Psoas muscle (tissue), 8 donors: ENCODE measurements at regions of chr6 and their contacts with region 1.

Region 1: GRCh38 chr6:107318100-107318736 is 141.1 kb downstream of the PDSS2 start:
- DNase-seq: peak; percentile 32 to 58
- ATAC-seq: peak; percentile 60 to 92 (median 82)
- H3K4me3 ChIP-seq: no peak overlapping the region
- H3K27ac ChIP-seq: no peak overlapping the region
- H3K4me1 ChIP-seq: no peaks in the 10 kb centered on the region
- H3K27me3 ChIP-seq: no peaks in the 10 kb centered on the region
- CTCF ChIP-seq: peak; percentile 62

Region 2: GRCh38 chr6:107264357-107264840 is 53.8 kb before region 1 on chr6:
- intact Hi-C with region 1: no loop called
- DNase-seq: no peak
- ATAC-seq: no peak
- H3K4me3 ChIP-seq: no peak overlapping the region
- H3K27ac ChIP-seq: no peak overlapping the region
- H3K4me1 ChIP-seq: no peaks in the 10 kb centered on the region
- H3K27me3 ChIP-seq: no peaks in the 10 kb centered on the region
- CTCF ChIP-seq: no peak

Region 3: DNA sequence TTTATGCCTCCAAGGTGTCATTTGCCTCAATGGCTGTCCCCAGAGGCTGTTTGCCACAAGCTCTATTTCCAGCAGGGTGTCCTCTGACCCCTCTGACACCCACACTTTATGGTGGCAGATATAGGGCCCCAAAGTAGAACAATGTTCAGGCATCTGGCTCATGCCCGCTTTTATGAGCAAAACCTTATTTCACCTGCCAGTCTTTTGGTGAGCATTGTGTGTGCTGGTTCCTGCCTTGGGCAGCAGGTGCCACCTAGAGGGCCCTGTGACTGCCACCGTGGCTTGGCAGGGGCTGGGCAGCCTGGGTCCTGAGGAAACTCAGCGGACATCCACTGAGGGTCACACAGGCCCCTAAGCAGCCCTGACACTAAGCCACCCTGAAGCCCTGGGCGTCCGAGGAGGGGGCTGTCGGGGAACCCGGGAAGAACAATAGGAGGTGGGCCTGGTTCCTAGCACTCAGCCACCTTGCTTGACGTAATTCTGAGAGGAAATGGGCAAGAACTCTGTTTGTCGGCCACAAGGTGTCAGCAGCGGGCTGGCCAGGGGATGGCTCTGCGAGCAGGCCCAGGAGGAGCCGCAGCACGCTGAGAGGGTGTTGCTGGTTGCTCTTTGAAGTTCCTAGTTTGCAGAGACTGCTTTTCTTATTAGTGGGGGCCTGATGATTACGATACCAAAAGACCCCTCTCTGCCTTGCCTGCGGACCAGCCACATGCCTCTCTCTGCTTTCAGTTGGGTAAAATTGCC is 356.9 kb after region 1 on chr6:
- intact Hi-C with region 1: loop called in 1 of 2 experiments (anchors 10 kb)
- DNase-seq: peak; percentile 81 to 94
- ATAC-seq: peak; percentile 85 to 96 (median 88)
- H3K4me3 ChIP-seq: peak overlapping the region; percentile 44
- H3K27ac ChIP-seq: peak overlapping the region; percentile 56
- H3K4me1 ChIP-seq: peaks cover 27% of the 10 kb centered on the region
- H3K27me3 ChIP-seq: no peaks in the 10 kb centered on the region
- CTCF ChIP-seq: peak; percentile 91

Region 4: DNA sequence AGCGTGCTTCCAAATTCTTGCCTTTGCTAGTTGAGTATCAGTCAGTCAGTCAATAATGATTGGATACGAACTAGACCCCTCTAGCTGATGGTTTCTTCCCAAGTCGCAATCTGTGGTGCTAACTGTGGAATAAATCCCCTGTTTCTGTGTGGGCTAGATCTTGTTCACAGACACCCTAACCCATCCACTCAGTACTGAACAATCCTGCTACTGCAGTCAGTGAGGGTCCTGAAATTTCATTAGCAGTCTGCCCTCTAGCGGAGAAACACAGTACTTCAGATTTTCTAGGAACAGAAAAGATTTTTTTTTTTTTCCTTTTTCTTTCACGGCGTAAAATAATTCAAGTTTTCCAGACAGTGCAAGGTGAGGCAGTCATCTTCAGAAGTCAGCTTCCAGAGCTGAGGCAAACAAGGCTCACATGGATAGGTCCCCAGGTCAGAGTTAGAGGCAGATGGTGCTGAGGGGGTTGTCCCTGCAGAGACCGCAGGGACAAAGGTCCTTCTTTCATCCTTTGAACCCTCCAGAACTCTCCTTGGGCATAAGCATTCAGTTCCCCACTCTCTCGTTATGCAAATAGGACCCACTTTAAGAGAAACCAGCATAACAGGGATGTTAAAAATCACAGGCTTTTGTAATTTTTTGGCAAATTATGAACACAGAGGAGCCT is 386.3 kb after region 1 on chr6:
- intact Hi-C with region 1: loop called in 1 of 2 experiments (anchors 10 kb)
- DNase-seq: no peak
- ATAC-seq: peak; percentile 47 to 74 (median 60)
- H3K4me3 ChIP-seq: no peak overlapping the region
- H3K27ac ChIP-seq: no peak overlapping the region
- H3K4me1 ChIP-seq: no peaks in the 10 kb centered on the region
- H3K27me3 ChIP-seq: no peaks in the 10 kb centered on the region
- CTCF ChIP-seq: peak; percentile 89